Ascending aorta (tissue), 2 donors: ENCODE measurements at regions of chr6 and their contacts with region 1.

Region 1: GRCh38 chr6:34392497-34393190 is at the start of gene NUDT3:
- DNase-seq: peak; percentile 69 to 98
- H3K4me3 ChIP-seq: peak within 1 kb of the TSS; percentile 82 to 87
- H3K27ac ChIP-seq: peak within 1 kb of the TSS; percentile 90 to 93
- H3K4me1 ChIP-seq: peaks cover 0 to 13% of the 10 kb centered on the region in 2 donors
- H3K27me3 ChIP-seq: no peaks in the 10 kb centered on the region
- CTCF ChIP-seq: peak; percentile 74 to 87 (median 81)
- total RNA-seq, gene NUDT3: 18.8 TPM

Region 2: GRCh38 chr6:34196126-34196830 is 196.4 kb before region 1 on chr6:
- intact Hi-C with region 1: loop called (anchors 1 kb)
- DNase-seq: peak; percentile 53 to 92
- H3K4me3 ChIP-seq: peak overlapping the region; percentile 57 to 71
- H3K27ac ChIP-seq: no peak overlapping the region
- H3K4me1 ChIP-seq: peaks cover 0 to 6% of the 10 kb centered on the region in 2 donors
- H3K27me3 ChIP-seq: no peaks in the 10 kb centered on the region
- CTCF ChIP-seq: peak; percentile 98

Region 3: GRCh38 chr6:34223956-34224940 is 168.4 kb before region 1 on chr6:
- intact Hi-C with region 1: loop called (anchors 1 kb)
- DNase-seq: peak; percentile 79 to 96
- H3K4me3 ChIP-seq: peak overlapping the region; percentile 73 to 77
- H3K27ac ChIP-seq: peak overlapping the region; percentile 91 to 92
- H3K4me1 ChIP-seq: peaks cover 0 to 10% of the 10 kb centered on the region in 2 donors
- H3K27me3 ChIP-seq: no peaks in the 10 kb centered on the region
- CTCF ChIP-seq: no peak

Region 4: GRCh38 chr6:34301408-34301807 is 91.2 kb before region 1 on chr6:
- intact Hi-C with region 1: loop called (anchors 1 kb)
- DNase-seq: peak in 1 of 2 donors; percentile 83
- H3K4me3 ChIP-seq: no peak overlapping the region
- H3K27ac ChIP-seq: peak overlapping the region; percentile 32 to 60
- H3K4me1 ChIP-seq: peaks cover 17 to 39% of the 10 kb centered on the region in 2 donors
- H3K27me3 ChIP-seq: no peaks in the 10 kb centered on the region
- CTCF ChIP-seq: no peak

Region 5: DNA sequence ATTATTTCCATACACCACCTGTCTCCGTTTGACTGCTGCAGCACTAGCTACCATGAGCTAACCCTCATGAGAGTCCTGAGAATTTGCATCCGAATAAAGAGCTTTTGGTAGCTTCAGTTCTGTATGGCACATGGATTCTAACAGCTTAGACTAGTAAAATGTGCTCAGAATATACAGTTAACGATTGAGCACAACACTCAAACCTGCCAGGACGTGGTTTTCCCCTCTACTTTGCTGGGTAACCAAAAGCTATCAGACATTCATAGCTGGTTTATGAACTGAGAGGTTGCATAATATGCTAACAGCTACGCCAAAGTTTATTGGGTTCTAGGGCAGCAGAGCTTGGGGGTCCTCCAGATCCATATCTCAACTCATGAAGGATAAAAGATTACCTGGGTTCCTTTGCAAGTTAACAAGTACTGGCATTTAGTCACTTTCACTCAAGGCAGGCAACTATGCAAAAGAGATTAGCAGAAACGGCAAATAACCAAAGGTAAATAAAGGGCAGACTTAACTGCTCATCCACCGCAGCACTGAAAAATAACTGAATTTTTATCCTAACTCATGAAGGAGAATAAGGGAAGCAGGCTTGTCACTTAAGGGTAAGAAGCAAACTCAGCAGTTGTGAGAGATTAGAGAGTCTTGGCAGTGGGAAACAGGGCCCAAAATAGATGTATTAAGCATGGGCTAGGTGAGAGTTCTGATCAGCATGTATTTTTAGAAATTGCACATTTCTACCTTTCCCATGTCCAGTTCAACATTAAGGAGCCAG is 29.5 kb before region 1 on chr6:
- intact Hi-C with region 1: loop called (anchors 2 kb)
- DNase-seq: no peak
- H3K4me3 ChIP-seq: no peak overlapping the region
- H3K27ac ChIP-seq: peak overlapping the region; percentile 59 to 72
- H3K4me1 ChIP-seq: peaks cover 0 to 37% of the 10 kb centered on the region in 2 donors
- H3K27me3 ChIP-seq: no peaks in the 10 kb centered on the region
- CTCF ChIP-seq: no peak

Region 6: GRCh38 chr6:34414999-34415858 is 22.6 kb after region 1 on chr6:
- intact Hi-C with region 1: loop called (anchors 2 kb)
- DNase-seq: peak in 1 of 2 donors; percentile 87
- H3K4me3 ChIP-seq: peak overlapping the region in 1 of 2 donors; percentile 39
- H3K27ac ChIP-seq: peak overlapping the region; percentile 76 to 81
- H3K4me1 ChIP-seq: peaks cover 4 to 8% of the 10 kb centered on the region in 2 donors
- H3K27me3 ChIP-seq: no peaks in the 10 kb centered on the region
- CTCF ChIP-seq: peak; percentile 63 to 82 (median 76)

Region 7: GRCh38 chr6:34447910-34448309 is 55.3 kb after region 1 on chr6:
- intact Hi-C with region 1: no loop called
- DNase-seq: no peak
- H3K4me3 ChIP-seq: no peak overlapping the region
- H3K27ac ChIP-seq: no peak overlapping the region
- H3K4me1 ChIP-seq: no peaks in the 10 kb centered on the region
- H3K27me3 ChIP-seq: no peaks in the 10 kb centered on the region
- CTCF ChIP-seq: no peak

Region 8: GRCh38 chr6:34526992-34527728 is 134.5 kb after region 1 on chr6:
- intact Hi-C with region 1: no loop called
- DNase-seq: peak; percentile 57 to 96
- H3K4me3 ChIP-seq: peak overlapping the region; percentile 37 to 40
- H3K27ac ChIP-seq: peak overlapping the region; percentile 41 to 52
- H3K4me1 ChIP-seq: peaks cover 0 to 8% of the 10 kb centered on the region in 2 donors
- H3K27me3 ChIP-seq: no peaks in the 10 kb centered on the region
- CTCF ChIP-seq: peak; percentile 66 to 85 (median 75)

Region 9: DNA sequence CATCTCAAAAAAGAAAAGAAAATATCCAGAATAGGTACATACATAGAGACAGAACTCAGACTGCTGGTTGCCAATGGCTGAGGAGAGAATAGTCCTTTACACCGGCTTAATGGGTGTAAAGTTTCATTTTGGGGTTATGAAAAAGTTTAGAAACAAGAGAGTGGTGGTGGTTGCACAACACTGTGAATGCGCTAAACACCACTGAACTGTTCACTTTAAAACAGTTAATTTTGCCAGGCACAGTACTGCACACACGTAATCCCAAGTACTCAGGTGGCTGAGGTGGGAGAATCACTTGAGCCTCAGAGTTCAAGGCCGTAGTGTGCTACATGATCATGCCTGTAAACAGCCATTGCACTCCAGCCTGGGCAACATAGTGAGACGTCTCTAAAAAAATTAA is 296.3 kb after region 1 on chr6:
- intact Hi-C with region 1: no loop called
- DNase-seq: no peak
- H3K4me3 ChIP-seq: no peak overlapping the region
- H3K27ac ChIP-seq: no peak overlapping the region
- H3K4me1 ChIP-seq: peaks cover 0 to 5% of the 10 kb centered on the region in 2 donors
- H3K27me3 ChIP-seq: no peaks in the 10 kb centered on the region
- CTCF ChIP-seq: no peak